MCF 10A (cell line): ENCODE measurements at regions of chr1 and their contacts with region 1.

Region 1: DNA sequence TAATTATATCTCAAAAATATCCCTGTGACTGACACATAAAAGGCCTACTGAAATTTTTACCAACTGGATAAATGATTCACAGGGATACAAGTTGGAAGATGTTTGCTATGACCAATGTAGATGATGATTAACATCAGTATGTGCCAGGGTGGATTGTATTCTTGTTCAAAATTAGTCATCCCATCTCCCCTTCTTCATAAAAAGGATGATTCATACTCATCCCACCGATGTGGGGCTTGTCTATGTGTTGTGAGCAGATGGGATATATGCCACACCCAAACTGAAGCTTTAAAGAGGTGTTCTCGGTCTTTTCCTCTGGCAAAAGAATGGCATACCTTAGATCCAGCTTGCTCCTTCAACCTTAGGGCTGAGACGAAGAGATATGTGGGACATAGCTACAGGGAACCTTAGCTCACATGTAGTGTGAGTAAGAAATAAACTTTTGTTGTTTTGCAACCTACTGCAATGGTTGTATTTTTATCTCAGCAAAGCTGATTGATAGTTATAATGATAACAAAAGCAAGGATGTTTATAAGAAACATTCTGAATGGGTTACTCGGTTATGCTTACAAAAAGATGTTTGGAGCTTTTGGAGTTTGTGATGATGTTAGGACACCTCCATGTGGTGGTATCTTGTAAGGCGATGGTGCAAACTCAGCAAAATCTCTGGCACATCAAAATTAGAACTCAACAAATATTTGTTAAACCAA is 29.4 kb downstream of the SPATA17 start:
- DNase-seq: peak; percentile 97
- H3K4me3 Mint-ChIP-seq: no peak overlapping the region
- H3K27ac Mint-ChIP-seq: peak overlapping the region; percentile 52
- H3K4me1 Mint-ChIP-seq: peaks cover 25% of the 10 kb centered on the region
- H3K27me3 Mint-ChIP-seq: no peaks in the 10 kb centered on the region
- CTCF ChIP-seq: peak; percentile 70

Region 2: GRCh38 chr1:216310776-216311175 is 1349.7 kb before region 1 on chr1:
- CTCF ChIA-PET with region 1: no interaction called
- POLR2A ChIA-PET with region 1: no interaction called
- intact Hi-C with region 1: loop called (anchors 5 kb)
- DNase-seq: peak; percentile 75
- H3K4me3 Mint-ChIP-seq: no peak overlapping the region
- H3K27ac Mint-ChIP-seq: no peak overlapping the region
- H3K4me1 Mint-ChIP-seq: no peaks in the 10 kb centered on the region
- H3K27me3 Mint-ChIP-seq: peaks cover 77% of the 10 kb centered on the region
- CTCF ChIP-seq: peak; percentile 95

Region 3: DNA sequence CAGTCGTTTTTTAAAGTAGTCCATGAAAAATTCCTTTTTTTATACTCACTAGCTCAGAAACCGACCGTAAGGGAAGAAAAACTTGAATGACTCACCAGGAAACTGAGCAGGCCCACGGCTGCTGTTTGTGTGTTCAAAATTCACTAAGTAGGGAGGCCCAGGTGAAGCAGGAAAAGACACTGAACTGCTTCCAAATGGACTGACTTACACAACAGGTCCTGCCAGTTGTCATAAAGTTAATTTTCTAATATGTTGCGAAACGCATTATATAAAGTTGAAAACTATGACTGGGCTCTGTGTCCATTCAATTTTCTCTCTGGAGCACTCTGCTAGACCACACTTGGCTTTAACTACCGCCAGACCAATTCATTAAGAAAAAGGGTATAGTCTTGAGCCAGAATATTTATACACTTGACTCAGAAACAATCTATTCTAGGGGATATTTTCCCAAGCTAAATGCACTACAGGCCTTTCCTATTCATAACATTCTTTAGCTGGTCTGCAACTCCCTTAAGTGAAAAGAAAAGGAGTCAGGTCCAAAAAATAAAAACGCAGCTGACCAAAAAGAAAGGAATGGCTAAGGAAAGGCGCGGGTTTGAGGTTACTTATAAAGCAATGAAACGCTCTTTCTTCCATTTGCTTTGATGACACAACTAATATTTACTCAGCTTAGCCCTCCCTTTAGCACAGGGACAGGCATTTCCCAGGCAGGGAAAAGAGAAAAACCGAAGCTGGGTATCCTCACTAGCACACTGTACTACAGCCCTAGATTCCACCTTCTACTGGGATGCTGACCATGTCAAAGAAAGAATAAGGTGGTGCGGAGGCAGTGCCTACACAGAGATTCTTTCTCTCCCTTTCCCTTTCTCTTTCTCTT is 631.0 kb before region 1 on chr1:
- CTCF ChIA-PET with region 1: no interaction called
- POLR2A ChIA-PET with region 1: no interaction called
- intact Hi-C with region 1: loop called (anchors 1 kb)
- DNase-seq: peak; percentile 95
- H3K4me3 Mint-ChIP-seq: no peak overlapping the region
- H3K27ac Mint-ChIP-seq: peak overlapping the region; percentile 9
- H3K4me1 Mint-ChIP-seq: peaks cover 21% of the 10 kb centered on the region
- H3K27me3 Mint-ChIP-seq: no peaks in the 10 kb centered on the region
- CTCF ChIP-seq: no peak

Region 4: GRCh38 chr1:217431393-217431792 is 229.1 kb before region 1 on chr1:
- CTCF ChIA-PET with region 1: no interaction called
- POLR2A ChIA-PET with region 1: no interaction called
- intact Hi-C with region 1: loop called (anchors 1 kb)
- DNase-seq: peak; percentile 29
- H3K4me3 Mint-ChIP-seq: no peak overlapping the region
- H3K27ac Mint-ChIP-seq: no peak overlapping the region
- H3K4me1 Mint-ChIP-seq: peaks cover 7% of the 10 kb centered on the region
- H3K27me3 Mint-ChIP-seq: no peaks in the 10 kb centered on the region
- CTCF ChIP-seq: peak; percentile 23

Region 5: GRCh38 chr1:217630711-217631591 is 29.6 kb before region 1 on chr1 and contains the starts of genes GPATCH2 and SPATA17:
- CTCF ChIA-PET with region 1: interaction called, 21 read pairs
- POLR2A ChIA-PET with region 1: interaction called, 38 read pairs
- intact Hi-C with region 1: loop called (anchors 1 kb)
- DNase-seq: peak; percentile 97
- H3K4me3 Mint-ChIP-seq: peak within 1 kb of the TSS; percentile 79
- H3K27ac Mint-ChIP-seq: peak within 1 kb of the TSS; percentile 100
- H3K4me1 Mint-ChIP-seq: peaks cover 30% of the 10 kb centered on the region
- H3K27me3 Mint-ChIP-seq: no peaks in the 10 kb centered on the region
- CTCF ChIP-seq: peak; percentile 29
- total RNA-seq, gene GPATCH2: 34.5 and 44.4 TPM in 2 replicates
- total RNA-seq, gene SPATA17: 4.5 and 11.0 TPM in 2 replicates

Region 6: DNA sequence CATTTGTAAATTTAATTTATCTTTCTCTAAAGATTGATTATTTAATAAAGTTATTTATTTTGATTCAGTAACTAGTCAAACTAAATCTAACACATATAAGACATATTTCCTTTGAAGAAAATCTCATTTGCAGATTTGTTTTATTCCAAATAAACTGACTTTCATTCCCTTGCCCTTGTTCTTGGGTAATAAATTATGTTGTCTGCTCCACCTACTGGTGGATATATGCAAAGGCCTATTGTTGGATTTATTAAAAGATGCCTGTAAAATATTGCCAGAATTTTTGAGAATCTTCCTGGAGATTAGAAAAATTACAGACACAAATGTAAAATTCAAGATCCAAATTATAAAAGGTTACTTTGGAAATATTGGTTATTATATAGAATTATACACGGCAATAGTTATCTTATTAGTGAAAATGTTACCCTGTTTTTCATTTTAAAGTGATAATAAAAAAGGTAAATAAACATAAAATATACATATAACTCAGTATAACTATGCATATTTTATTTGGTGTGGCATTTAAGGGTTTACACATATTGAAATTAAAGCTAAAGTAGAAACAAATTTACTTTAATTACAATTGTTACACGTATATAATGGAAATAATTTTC is 86.8 kb after region 1 on chr1:
- CTCF ChIA-PET with region 1: interaction called, 3 read pairs
- POLR2A ChIA-PET with region 1: no interaction called
- intact Hi-C with region 1: loop called (anchors 2 kb)
- DNase-seq: peak; percentile 66
- H3K4me3 Mint-ChIP-seq: no peak overlapping the region
- H3K27ac Mint-ChIP-seq: no peak overlapping the region
- H3K4me1 Mint-ChIP-seq: no peaks in the 10 kb centered on the region
- H3K27me3 Mint-ChIP-seq: no peaks in the 10 kb centered on the region
- CTCF ChIP-seq: peak; percentile 93